ENCODE measurements at regions of chr20 and their contacts with region 1.

Region 1: DNA sequence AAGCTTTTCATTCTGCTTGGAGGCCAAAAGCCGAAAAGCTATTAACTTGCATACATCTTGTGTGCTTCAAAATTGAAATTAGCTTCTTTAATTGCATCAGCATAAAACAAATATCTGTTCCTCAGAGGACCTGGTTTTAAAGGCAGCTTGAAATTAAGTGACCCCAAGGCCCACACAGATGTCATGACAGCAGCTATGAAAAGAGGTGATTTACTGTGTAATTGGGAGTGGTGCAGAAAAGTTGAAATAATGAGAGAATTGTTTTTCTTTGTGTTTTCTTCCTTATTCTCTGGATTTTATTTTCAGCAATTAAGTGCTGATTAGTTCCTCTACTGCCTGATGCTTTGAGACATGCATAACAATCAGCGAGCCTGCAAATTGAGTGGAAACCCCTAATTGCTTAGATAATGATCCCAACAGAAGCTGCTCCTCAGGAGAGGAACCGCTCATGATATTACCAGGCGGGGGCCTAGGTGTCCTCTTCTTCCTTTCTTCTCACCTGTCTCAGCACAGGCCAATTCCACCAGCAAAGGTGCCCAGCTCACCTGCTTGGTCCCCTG is 34.1 kb upstream of the GGTLC1 start:
- DNase-seq: no peak
- ATAC-seq: no peak
- H3K4me3 Mint-ChIP-seq: no peak overlapping the region
- H3K27ac Mint-ChIP-seq: no peak overlapping the region
- H3K4me1 Mint-ChIP-seq: peaks cover 12% of the 10 kb centered on the region
- H3K27me3 Mint-ChIP-seq: peaks cover 2% of the 10 kb centered on the region
- CTCF ChIP-seq: no peak

Region 2: DNA sequence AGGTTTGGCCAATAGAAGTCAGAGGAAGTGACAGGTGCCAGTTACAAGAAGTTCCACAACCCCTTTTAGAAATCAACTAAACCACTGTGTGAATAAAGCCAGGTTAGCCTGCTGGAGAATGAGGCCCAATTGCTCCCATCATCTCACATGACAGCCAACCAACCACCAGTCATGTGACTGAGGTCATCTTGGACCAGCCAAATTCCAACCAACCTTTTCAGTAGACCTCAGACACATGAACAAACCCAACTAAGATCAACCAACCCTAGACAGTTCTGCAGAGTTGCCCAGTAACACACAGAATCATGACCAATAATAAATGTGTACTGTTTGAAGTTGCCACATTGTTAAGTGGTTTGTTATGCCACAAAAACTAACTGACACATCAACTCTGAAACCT is 10.4 kb after region 1 on chr20:
- CTCF ChIA-PET with region 1: interaction called, 3 read pairs
- POLR2A ChIA-PET with region 1: interaction called, 12 read pairs
- intact Hi-C with region 1: no loop called
- DNase-seq: no peak
- ATAC-seq: no peak
- H3K4me3 Mint-ChIP-seq: no peak overlapping the region
- H3K27ac Mint-ChIP-seq: no peak overlapping the region
- H3K4me1 Mint-ChIP-seq: peaks cover 13% of the 10 kb centered on the region
- H3K27me3 Mint-ChIP-seq: no peaks in the 10 kb centered on the region
- CTCF ChIP-seq: no peak